Right lobe of liver (tissue), 6 donors: ENCODE measurements at regions of chr11 and their contacts with region 1.

Region 1: GRCh38 chr11:114262681-114263512 is 33.3 kb upstream of the NNMT start:
- DNase-seq: peak in 2 of 3 donors; percentile 36 to 63
- ATAC-seq: peak; percentile 47 to 60 (median 56)
- H3K4me3 ChIP-seq: no peak overlapping the region
- H3K27ac ChIP-seq: peak overlapping the region in 2 of 3 donors; percentile 68 to 80
- H3K4me1 ChIP-seq: peaks cover 0 to 74% (median 31%) of the 10 kb centered on the region in 4 donors
- H3K27me3 ChIP-seq: no peaks in the 10 kb centered on the region
- CTCF ChIP-seq: peak; percentile 52 to 68 (median 64)
- POLR2A ChIP-seq: no peak

Region 2: DNA sequence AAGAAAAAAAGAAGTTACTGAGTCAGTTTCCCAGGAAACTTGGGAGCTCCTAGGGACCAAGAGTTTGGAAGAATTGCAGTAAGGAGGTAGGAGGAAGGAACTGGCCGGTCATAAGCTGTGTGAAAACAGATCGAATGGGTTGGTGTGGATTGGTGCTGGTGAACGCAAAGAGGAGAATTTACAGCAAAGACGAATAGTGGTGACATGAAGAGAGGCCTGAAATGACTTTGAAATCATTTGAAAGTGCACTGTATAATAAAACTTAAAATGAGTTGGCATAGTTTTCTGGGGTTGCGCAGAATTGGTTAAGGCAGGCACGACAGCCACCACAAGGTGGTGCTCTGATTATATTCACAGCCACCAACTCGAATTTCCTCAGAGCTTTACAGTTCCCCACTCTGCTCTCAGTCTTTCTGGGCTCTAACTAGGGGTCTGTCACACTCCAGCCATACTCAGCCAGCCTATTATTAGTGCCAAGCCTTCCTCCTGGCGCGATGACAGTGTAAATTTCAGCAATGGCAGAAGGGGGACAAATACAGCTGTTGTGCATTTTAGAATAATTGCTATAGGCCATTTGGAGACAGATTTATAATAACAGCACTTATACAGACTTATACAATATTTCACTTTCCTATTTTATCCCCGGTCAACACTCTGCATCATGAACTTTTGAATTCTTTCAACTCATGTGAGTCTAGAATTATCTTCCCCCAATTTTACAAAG is 366.6 kb before region 1 on chr11:
- intact Hi-C with region 1: loop called in 1 of 2 experiments (anchors 5 kb)
- DNase-seq: peak in 1 of 3 donors; percentile 30
- ATAC-seq: peak; percentile 88 to 90 (median 88)
- H3K4me3 ChIP-seq: no peak overlapping the region
- H3K27ac ChIP-seq: no peak overlapping the region
- H3K4me1 ChIP-seq: no peaks in the 10 kb centered on the region
- H3K27me3 ChIP-seq: no peaks in the 10 kb centered on the region
- CTCF ChIP-seq: peak; percentile 55 to 86 (median 84)
- POLR2A ChIP-seq: no peak

Region 3: DNA sequence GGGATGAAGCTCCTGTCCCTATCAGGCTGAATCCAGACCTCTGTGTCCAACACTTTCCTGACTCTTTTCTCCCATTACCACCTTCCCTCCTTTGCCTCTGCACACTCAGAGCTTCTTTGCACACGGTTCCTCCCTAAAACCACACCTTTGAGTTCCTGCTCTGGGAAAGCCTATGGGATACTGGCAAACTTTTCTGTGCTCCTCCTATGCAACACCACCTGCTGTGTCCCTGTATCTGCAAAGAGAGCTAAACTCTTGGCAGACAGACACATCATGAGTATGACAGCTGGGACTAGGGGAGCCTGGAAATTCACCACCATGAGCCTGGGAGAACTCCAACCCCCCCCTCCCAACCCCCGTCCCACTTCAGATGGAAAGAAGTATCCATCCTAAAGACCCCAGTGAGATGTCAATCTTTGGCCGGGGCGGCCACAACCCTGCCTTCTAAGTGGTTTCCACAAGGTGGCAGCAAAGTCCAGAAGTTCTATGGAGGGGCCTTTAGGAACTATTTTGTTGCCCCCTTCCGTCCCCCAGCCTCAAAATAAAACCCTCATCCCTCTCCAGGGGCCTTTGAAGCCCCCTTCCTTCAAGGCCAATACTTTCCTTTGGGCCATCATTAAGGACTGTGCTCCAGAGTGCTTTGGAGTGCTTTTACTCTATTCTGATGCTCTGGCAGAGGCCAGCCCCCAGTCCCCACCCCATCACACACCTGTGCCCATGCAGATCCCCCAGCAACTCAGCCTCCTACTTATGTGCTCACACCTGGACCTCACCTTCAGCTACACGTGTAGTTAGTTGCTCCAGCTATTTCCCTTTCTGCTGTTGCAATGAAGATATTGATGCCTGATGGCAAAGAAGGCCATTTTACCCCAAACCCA is 268.6 kb before region 1 on chr11:
- intact Hi-C with region 1: loop called (anchors 2 to 5 kb)
- DNase-seq: no peak
- ATAC-seq: peak; percentile 52 to 68 (median 60)
- H3K4me3 ChIP-seq: no peak overlapping the region
- H3K27ac ChIP-seq: no peak overlapping the region
- H3K4me1 ChIP-seq: peaks cover 0 to 4% (median 0%) of the 10 kb centered on the region in 4 donors
- H3K27me3 ChIP-seq: no peaks in the 10 kb centered on the region
- CTCF ChIP-seq: peak; percentile 64 to 69 (median 68)
- POLR2A ChIP-seq: no peak

Region 4: DNA sequence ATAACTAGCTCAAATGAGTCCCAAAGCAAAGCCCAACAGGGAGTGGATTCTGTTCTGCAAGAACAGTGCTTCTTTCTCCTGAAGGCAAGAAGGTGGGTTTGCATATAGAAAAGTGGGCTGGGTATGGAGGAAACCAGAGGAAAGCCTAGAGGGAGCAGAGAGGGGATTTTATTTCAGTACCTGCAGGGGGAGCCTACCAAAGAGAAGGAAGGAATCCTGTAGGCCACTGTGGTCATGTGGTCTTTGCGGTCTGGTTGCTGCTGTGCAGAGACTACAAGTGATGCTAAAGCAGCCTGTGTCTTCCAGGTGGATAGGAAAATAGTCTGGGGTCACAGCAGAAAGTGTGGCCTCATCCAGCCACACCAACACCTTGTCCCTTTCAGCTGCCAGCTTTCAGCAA is 236.5 kb before region 1 on chr11:
- intact Hi-C with region 1: loop called in 1 of 2 experiments (anchors 10 kb)
- DNase-seq: no peak
- ATAC-seq: no peak
- H3K4me3 ChIP-seq: no peak overlapping the region
- H3K27ac ChIP-seq: no peak overlapping the region
- H3K4me1 ChIP-seq: no peaks in the 10 kb centered on the region
- H3K27me3 ChIP-seq: no peaks in the 10 kb centered on the region
- CTCF ChIP-seq: no peak
- POLR2A ChIP-seq: no peak